ENCODE measurements at regions of chr2 and their contacts with region 1.

Region 1: DNA sequence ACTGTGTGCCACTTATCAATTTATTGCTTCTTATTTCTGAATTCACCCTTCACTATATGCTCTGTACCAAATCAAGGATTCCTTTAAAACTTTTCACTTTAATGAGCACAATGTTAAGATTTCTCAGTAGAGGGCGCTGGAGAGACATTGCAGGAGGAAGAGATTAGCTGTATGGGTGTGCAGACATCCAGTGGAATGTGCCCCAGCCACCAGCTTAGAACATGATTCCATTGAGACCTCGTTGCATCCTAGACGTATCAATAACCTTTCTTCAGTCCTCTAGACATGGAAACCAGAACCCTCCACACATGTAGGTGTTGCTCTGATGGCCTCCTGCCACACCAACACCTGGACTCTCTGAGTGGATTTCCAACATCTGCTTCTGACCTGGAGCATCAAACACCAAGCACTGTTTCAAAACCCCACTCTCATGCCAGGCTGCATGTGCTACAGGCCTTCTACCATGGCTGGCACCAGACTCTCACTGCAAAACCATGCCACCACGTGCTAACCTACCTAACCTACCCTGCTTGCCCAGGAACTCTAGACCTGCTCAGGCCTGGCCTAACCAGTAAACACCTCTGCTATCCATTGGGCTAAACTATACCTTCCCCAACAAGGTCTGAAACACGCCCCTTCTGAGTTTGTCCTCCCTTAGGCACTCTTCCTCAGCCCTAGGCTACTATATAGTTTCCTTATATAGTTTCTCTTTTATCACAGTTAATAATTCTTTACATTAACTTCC is 633.2 kb upstream of the PKDCC start:
- DNase-seq: no peak
- H3K4me3 ChIP-seq: no peak overlapping the region
- H3K27ac ChIP-seq: no peak overlapping the region
- H3K4me1 ChIP-seq: no peaks in the 10 kb centered on the region
- H3K27me3 ChIP-seq: no peaks in the 10 kb centered on the region
- CTCF ChIP-seq: peak in 4 of 6 experiments; percentile 28 to 42 (median 34)
- POLR2A ChIP-seq: no peak

Region 2: GRCh38 chr2:40935349-40935748 is 479.3 kb before region 1 on chr2:
- intact Hi-C with region 1: no loop called
- DNase-seq: no peak
- H3K4me3 ChIP-seq: no peak overlapping the region
- H3K27ac ChIP-seq: no peak overlapping the region
- H3K4me1 ChIP-seq: no peaks in the 10 kb centered on the region
- H3K27me3 ChIP-seq: no peaks in the 10 kb centered on the region
- CTCF ChIP-seq: no peak
- POLR2A ChIP-seq: no peak

Region 3: DNA sequence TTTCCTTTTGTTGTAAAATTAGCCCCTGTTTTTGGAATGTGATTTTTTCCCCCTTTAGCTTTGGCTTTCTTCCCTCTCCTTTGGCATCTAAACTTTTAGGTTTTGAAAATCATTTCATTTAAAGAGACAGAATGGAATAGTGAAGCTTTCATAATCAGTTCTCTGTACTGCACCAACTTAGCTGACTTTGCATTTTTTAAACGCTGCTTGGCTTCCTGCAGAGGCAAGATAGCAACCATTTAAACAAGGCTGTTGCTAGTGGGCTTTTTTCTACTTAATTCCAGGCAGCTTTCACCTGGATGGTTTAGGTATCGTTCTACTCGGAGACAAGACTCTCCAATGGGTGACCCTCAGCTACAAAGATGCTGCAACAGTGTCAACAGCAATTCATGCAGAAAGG is 365.2 kb after region 1 on chr2:
- intact Hi-C with region 1: loop called (anchors 10 kb)
- DNase-seq: no peak
- H3K4me3 ChIP-seq: no peak overlapping the region
- H3K27ac ChIP-seq: peak overlapping the region in 1 of 3 donors; percentile 11
- H3K4me1 ChIP-seq: peaks cover 21 to 24% of the 10 kb centered on the region in 2 donors
- H3K27me3 ChIP-seq: no peaks in the 10 kb centered on the region
- CTCF ChIP-seq: no peak
- POLR2A ChIP-seq: no peak